ENCODE measurements at regions of chr13 and their contacts with region 1.

Region 1: GRCh38 chr13:113584205-113584869 is at the start of gene TFDP1:
- DNase-seq: peak; percentile 63
- ATAC-seq: peak; percentile 85
- H3K4me3 ChIP-seq: peak within 1 kb of the TSS; percentile 85
- H3K27ac ChIP-seq: peak within 1 kb of the TSS; percentile 71
- H3K4me1 ChIP-seq: peaks cover 9% of the 10 kb centered on the region
- H3K27me3 ChIP-seq: no peaks in the 10 kb centered on the region
- CTCF ChIP-seq: no peak
- EP300 ChIP-seq: no peak
- POLR2A ChIP-seq: peak; percentile 71
- RAD21 ChIP-seq: no peak
- polyA plus RNA-seq, gene TFDP1: 64.0 to 95.8 TPM

Region 2: GRCh38 chr13:113208424-113209335 is 375.7 kb before region 1 on chr13 and contains the start of gene PCID2:
- CTCF ChIA-PET with region 1: no interaction called
- POLR2A ChIA-PET with region 1: no interaction called
- RAD21 ChIA-PET with region 1: no interaction called
- SMC1A ChIA-PET with region 1: no interaction called
- in situ Hi-C with region 1: no loop called
- intact Hi-C with region 1: loop called (anchors 5 kb)
- DNase-seq: peak; percentile 48
- ATAC-seq: peak; percentile 85
- H3K4me3 ChIP-seq: peak within 1 kb of the TSS; percentile 87
- H3K27ac ChIP-seq: peak within 1 kb of the TSS; percentile 95
- H3K4me1 ChIP-seq: peaks cover 6% of the 10 kb centered on the region
- H3K27me3 ChIP-seq: no peaks in the 10 kb centered on the region
- CTCF ChIP-seq: 0 out of 6 replicates have a peak, but pooled peaks of 1 of the 3 experiments have one; percentile 2
- EP300 ChIP-seq: no peak
- POLR2A ChIP-seq: peak; percentile 89
- RAD21 ChIP-seq: no peak
- polyA plus RNA-seq, gene PCID2: 65.4 to 71.8 TPM

Region 3: GRCh38 chr13:113458253-113459065 is 125.9 kb before region 1 on chr13:
- CTCF ChIA-PET with region 1: no interaction called
- POLR2A ChIA-PET with region 1: no interaction called
- RAD21 ChIA-PET with region 1: no interaction called
- SMC1A ChIA-PET with region 1: no interaction called
- in situ Hi-C with region 1: no loop called
- intact Hi-C with region 1: no loop called
- DNase-seq: no peak
- ATAC-seq: no peak
- H3K4me3 ChIP-seq: no peak overlapping the region
- H3K27ac ChIP-seq: no peak overlapping the region
- H3K4me1 ChIP-seq: no peaks in the 10 kb centered on the region
- H3K27me3 ChIP-seq: no peaks in the 10 kb centered on the region
- CTCF ChIP-seq: peak; percentile 23 to 36 (median 26); a peak in 4 of 6 replicates
- EP300 ChIP-seq: no peak
- POLR2A ChIP-seq: no peak
- RAD21 ChIP-seq: no peak

Region 4: DNA sequence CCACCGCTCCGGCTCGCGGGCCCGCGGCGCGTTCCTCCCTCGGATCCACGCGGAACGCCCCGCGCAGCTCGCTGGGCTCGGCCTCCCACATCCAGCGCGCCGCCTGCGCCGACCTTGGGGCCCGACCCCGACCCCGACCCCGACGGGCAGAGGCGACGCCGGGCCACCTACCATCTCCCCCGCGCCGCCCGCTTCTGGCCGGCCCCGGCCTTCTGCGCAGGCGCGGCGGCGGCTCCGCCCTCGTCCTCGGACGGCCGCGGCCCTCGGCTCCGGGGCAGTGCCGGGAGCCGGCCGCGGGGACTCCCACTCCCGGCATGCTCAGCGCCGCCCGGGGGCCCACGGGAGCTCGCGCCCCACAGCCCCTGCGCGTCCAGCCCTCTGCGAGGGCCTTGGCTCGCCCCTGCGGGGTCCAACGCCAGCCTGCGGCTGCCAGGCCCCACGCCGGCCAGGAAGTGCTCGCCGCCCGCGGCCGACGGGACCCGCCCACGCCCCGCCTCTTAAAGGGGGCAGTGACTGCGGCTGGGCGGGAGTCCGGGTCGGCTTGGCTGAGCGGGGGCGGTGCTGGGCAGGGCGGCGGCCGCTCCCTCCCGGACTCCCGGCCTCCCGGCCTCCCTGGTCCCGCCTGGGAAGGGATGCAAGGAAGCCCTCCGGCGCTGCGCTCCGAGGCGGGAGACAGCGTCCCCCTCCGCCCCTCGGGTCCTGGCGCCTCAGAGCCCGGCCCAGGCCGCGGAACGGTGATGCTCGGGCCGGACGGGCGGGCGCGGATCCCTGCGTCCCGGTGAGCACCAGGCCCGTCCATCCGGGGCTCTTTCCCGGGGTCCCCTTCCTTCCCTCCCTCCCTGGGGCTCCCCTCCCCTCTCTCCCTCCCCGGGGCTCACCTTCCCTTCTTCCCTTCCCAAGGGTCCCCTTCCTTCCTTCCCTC is 93.6 kb before region 1 on chr13 and contains the start of gene DCUN1D2:
- CTCF ChIA-PET with region 1: no interaction called
- POLR2A ChIA-PET with region 1: no interaction called
- RAD21 ChIA-PET with region 1: no interaction called
- SMC1A ChIA-PET with region 1: no interaction called
- in situ Hi-C with region 1: no loop called
- intact Hi-C with region 1: loop called (anchors 5 kb)
- DNase-seq: peak; percentile 55
- ATAC-seq: peak; percentile 88
- H3K4me3 ChIP-seq: peak within 1 kb of the TSS; percentile 68
- H3K27ac ChIP-seq: peak within 1 kb of the TSS; percentile 72
- H3K4me1 ChIP-seq: peaks cover 28% of the 10 kb centered on the region
- H3K27me3 ChIP-seq: no peaks in the 10 kb centered on the region
- CTCF ChIP-seq: no peak
- EP300 ChIP-seq: no peak
- POLR2A ChIP-seq: peak; percentile 87
- RAD21 ChIP-seq: no peak
- polyA plus RNA-seq, gene DCUN1D2: 2.5 to 3.0 TPM